Gastrocnemius medialis (tissue), 4 donors: ENCODE measurements at regions of chr2 and their contacts with region 1.

Region 1: DNA sequence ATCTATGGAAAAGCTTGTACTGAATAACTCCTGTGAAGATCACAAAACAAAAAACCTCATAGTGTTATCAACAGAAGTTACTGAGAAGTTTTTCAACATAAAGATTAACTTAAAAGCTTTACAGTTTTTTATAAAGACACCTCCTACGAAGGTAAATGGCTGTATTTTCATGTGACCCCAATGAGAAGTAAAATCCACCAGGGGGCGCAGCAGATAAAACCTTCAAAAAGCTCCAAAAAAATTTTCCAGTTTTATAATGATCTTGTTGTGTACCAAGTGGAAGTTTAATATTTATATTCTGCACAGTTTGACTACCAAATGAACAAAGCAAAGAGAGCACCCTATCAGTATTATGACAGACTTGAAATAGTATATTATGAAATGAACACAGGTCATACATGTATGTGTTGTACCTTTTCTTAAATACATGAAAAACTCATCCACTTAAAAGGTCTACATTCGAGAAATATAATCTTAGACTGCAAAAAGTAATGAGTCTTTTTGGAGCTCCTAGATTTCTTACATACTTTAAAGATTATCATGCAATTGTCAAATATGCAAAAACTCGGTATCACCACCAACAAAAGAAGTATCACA is 38.5 kb downstream of the PNO1 start:
- DNase-seq: no peak
- ATAC-seq: no peak
- H3K4me3 ChIP-seq: no peak overlapping the region
- H3K27ac ChIP-seq: peak overlapping the region in 2 of 4 donors; percentile 29 to 40
- H3K4me1 ChIP-seq: peaks cover 40 to 44% of the 10 kb centered on the region in 2 donors
- H3K27me3 ChIP-seq: no peaks in the 10 kb centered on the region
- CTCF ChIP-seq: peak in 4 of 5 experiments; percentile 64 to 82 (median 76)
- POLR2A ChIP-seq: no peak

Region 2: GRCh38 chr2:68244456-68244855 is 48.2 kb after region 1 on chr2:
- in situ Hi-C with region 1: loop called in 3 of 4 experiments (anchors 10 kb)
- intact Hi-C with region 1: no loop called
- DNase-seq: no peak
- ATAC-seq: no peak
- H3K4me3 ChIP-seq: no peak overlapping the region
- H3K27ac ChIP-seq: no peak overlapping the region
- H3K4me1 ChIP-seq: peaks cover 73 to 78% of the 10 kb centered on the region in 2 donors
- H3K27me3 ChIP-seq: no peaks in the 10 kb centered on the region
- CTCF ChIP-seq: no peak
- POLR2A ChIP-seq: no peak

Region 3: GRCh38 chr2:68263632-68264031 is 67.4 kb after region 1 on chr2:
- in situ Hi-C with region 1: no loop called
- intact Hi-C with region 1: no loop called
- DNase-seq: no peak
- ATAC-seq: no peak
- H3K4me3 ChIP-seq: no peak overlapping the region
- H3K27ac ChIP-seq: no peak overlapping the region
- H3K4me1 ChIP-seq: no peaks in the 10 kb centered on the region
- H3K27me3 ChIP-seq: no peaks in the 10 kb centered on the region
- CTCF ChIP-seq: no peak
- POLR2A ChIP-seq: no peak

Region 4: DNA sequence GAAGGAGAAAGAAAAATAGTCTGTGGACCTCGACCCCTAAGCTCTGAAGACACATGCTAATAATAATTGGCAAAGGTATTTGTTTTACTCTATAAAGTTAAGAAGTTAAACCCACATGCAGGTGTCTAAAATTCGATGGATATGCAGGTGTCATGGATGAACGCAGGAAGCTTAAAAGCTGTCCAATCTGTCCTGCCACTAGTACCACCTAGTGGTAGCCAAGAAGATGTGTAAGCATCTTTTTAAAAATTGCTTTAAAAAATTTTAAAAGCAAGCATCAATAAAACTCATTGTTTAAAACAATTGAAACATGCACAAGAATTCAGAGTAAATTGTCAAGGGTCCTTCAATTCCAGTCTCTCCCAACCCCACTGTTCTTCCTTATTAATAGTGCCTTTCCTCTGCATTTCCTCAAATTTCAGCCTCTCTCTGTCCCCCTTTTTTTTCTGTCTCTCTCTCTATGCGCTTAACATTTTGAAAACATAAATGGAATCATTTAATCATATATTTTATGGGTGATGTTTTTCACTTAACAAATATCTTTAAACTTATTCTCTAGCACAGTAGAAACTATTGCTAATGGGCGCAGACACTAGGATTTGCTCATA is 86.7 kb after region 1 on chr2:
- in situ Hi-C with region 1: no loop called
- intact Hi-C with region 1: loop called (anchors 10 kb)
- DNase-seq: no peak
- ATAC-seq: peak in 1 of 2 donors; percentile 54
- H3K4me3 ChIP-seq: no peak overlapping the region
- H3K27ac ChIP-seq: no peak overlapping the region
- H3K4me1 ChIP-seq: peaks cover 16 to 17% of the 10 kb centered on the region in 2 donors
- H3K27me3 ChIP-seq: no peaks in the 10 kb centered on the region
- CTCF ChIP-seq: peak in 4 of 5 experiments; percentile 53 to 75 (median 60)
- POLR2A ChIP-seq: no peak

Region 5: GRCh38 chr2:68295516-68295915 is 99.3 kb after region 1 on chr2:
- in situ Hi-C with region 1: loop called in 1 of 4 experiments (anchors 5 kb)
- intact Hi-C with region 1: no loop called
- DNase-seq: no peak
- ATAC-seq: no peak
- H3K4me3 ChIP-seq: no peak overlapping the region
- H3K27ac ChIP-seq: peak overlapping the region in 1 of 4 donors; percentile 45
- H3K4me1 ChIP-seq: peaks cover 34 to 46% of the 10 kb centered on the region in 2 donors
- H3K27me3 ChIP-seq: no peaks in the 10 kb centered on the region
- CTCF ChIP-seq: no peak
- POLR2A ChIP-seq: no peak

Region 6: GRCh38 chr2:68441179-68441993 is 245.2 kb after region 1 on chr2:
- in situ Hi-C with region 1: no loop called
- intact Hi-C with region 1: loop called (anchors 5 kb)
- DNase-seq: peak; percentile 66 to 68
- ATAC-seq: peak; percentile 94 to 96
- H3K4me3 ChIP-seq: no peak overlapping the region
- H3K27ac ChIP-seq: no peak overlapping the region
- H3K4me1 ChIP-seq: no peaks in the 10 kb centered on the region
- H3K27me3 ChIP-seq: no peaks in the 10 kb centered on the region
- CTCF ChIP-seq: peak; percentile 70 to 87 (median 80)
- POLR2A ChIP-seq: no peak

Region 7: DNA sequence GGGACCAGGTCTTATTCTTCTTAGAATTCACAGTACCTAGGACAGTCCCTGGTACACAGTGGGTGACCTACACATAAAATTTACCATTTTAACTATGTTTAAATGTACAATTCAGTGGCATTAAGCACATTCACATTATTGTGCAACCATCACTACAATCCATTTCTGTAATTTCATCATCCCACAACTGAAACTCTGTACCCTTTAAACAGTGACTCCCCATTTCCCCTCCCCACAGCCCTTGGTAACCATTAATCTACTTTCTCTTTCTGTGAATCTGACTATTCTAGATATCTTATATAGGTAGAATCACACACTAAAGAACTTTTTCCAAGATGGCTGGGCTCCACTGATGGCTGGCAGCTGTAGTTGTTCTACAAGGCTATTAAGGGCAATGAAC is 1149.2 kb after region 1 on chr2:
- in situ Hi-C with region 1: no loop called
- intact Hi-C with region 1: no loop called
- DNase-seq: no peak
- ATAC-seq: no peak
- H3K4me3 ChIP-seq: no peak overlapping the region
- H3K27ac ChIP-seq: no peak overlapping the region
- H3K4me1 ChIP-seq: no peaks in the 10 kb centered on the region
- H3K27me3 ChIP-seq: no peaks in the 10 kb centered on the region
- CTCF ChIP-seq: no peak
- POLR2A ChIP-seq: no peak